ENCODE measurements at regions of chr2 and their contacts with region 1.

Region 1: GRCh38 chr2:44167940-44168680 is 565 bp upstream of the PPM1B start:
- DNase-seq: peak; percentile 98
- H3K4me3 Mint-ChIP-seq: peak overlapping the region; percentile 87
- H3K27ac Mint-ChIP-seq: peak overlapping the region; percentile 99
- H3K4me1 Mint-ChIP-seq: peaks cover 34% of the 10 kb centered on the region
- H3K27me3 Mint-ChIP-seq: no peaks in the 10 kb centered on the region

Region 2: GRCh38 chr2:43995733-43996533 is 172.2 kb before region 1 on chr2 and contains the start of gene LRPPRC:
- CTCF ChIA-PET with region 1: no interaction called
- POLR2A ChIA-PET with region 1: no interaction called
- intact Hi-C with region 1: loop called (anchors 1 kb)
- DNase-seq: peak; percentile 94
- H3K4me3 Mint-ChIP-seq: peak within 1 kb of the TSS; percentile 90
- H3K27ac Mint-ChIP-seq: peak within 1 kb of the TSS; percentile 95
- H3K4me1 Mint-ChIP-seq: peaks cover 40% of the 10 kb centered on the region
- H3K27me3 Mint-ChIP-seq: no peaks in the 10 kb centered on the region
- total RNA-seq, gene LRPPRC: 141 to 144 TPM

Region 3: DNA sequence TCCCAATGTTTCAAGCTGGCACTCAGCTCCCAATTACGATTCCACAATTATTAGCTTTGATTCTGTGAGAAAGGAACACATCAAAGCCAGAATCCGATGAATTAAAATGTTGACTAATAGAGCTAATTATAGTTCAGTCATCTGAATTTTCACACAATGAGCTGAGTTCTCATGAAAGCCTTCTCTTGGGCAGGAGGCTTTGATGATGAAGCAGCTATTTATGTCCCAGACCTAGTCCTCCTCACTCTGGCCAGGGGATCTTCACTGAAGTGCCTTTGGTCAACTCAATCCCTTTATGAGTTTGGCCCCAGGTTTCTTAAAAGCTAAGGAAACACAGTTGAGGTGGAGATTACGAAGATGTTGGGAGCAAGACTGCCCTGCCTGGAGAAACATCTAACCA is 74.1 kb before region 1 on chr2:
- CTCF ChIA-PET with region 1: no interaction called
- POLR2A ChIA-PET with region 1: no interaction called
- intact Hi-C with region 1: no loop called
- DNase-seq: no peak
- H3K4me3 Mint-ChIP-seq: no peak overlapping the region
- H3K27ac Mint-ChIP-seq: no peak overlapping the region
- H3K4me1 Mint-ChIP-seq: peaks cover 12% of the 10 kb centered on the region
- H3K27me3 Mint-ChIP-seq: no peaks in the 10 kb centered on the region

Region 4: DNA sequence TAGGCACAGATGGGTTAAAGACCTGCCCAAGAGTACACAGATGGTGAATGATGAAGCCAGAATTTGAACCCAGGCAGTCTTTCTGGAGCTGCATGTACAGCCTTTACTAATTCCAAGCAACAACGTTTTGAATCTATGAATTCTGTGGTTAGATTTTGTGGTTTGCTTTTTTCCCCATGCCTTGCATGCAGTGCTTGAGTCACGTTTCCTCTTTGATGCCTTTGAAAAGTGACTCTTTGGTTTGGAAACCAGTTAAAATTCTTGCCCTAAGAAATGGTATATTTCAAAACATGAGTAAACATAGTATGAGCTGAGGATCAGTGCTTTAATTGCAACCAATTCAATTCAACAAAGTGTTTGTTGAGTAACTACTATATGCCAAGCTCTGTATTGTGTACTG is 47.7 kb before region 1 on chr2:
- CTCF ChIA-PET with region 1: no interaction called
- POLR2A ChIA-PET with region 1: interaction called, 5 read pairs
- intact Hi-C with region 1: loop called (anchors 1 kb)
- DNase-seq: peak; percentile 63
- H3K4me3 Mint-ChIP-seq: peak overlapping the region; percentile 28
- H3K27ac Mint-ChIP-seq: peak overlapping the region; percentile 39
- H3K4me1 Mint-ChIP-seq: peaks cover 34% of the 10 kb centered on the region
- H3K27me3 Mint-ChIP-seq: peaks cover 5% of the 10 kb centered on the region

Region 5: GRCh38 chr2:44148999-44149398 is 19.1 kb before region 1 on chr2:
- CTCF ChIA-PET with region 1: no interaction called
- POLR2A ChIA-PET with region 1: no interaction called
- intact Hi-C with region 1: no loop called
- DNase-seq: no peak
- H3K4me3 Mint-ChIP-seq: no peak overlapping the region
- H3K27ac Mint-ChIP-seq: no peak overlapping the region
- H3K4me1 Mint-ChIP-seq: no peaks in the 10 kb centered on the region
- H3K27me3 Mint-ChIP-seq: no peaks in the 10 kb centered on the region

Region 6: GRCh38 chr2:44205169-44205568 is 37.1 kb after region 1 on chr2:
- CTCF ChIA-PET with region 1: no interaction called
- POLR2A ChIA-PET with region 1: no interaction called
- intact Hi-C with region 1: no loop called
- DNase-seq: no peak
- H3K4me3 Mint-ChIP-seq: no peak overlapping the region
- H3K27ac Mint-ChIP-seq: peak overlapping the region; percentile 28
- H3K4me1 Mint-ChIP-seq: peaks cover 45% of the 10 kb centered on the region
- H3K27me3 Mint-ChIP-seq: no peaks in the 10 kb centered on the region

Region 7: DNA sequence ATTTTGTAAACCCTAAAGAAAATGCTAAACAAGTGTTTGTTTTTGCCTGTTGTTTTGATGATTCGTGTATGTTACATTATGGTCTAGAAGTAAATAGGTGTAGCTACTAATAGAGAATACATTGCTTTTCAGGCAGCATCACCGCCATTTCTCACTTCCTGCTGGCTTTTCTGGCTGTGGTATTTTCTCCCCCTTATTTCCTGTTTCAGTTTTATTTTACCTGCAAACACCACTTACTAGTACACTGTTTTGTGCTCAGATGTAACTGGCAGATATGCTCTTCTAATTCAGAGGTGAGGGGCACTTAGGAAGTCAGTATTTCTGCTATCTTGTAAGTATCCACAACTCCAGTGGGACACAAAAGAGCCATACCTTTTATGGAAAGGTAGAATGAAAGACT is 69.1 kb after region 1 on chr2:
- CTCF ChIA-PET with region 1: no interaction called
- POLR2A ChIA-PET with region 1: no interaction called
- intact Hi-C with region 1: loop called (anchors 2 kb)
- DNase-seq: peak; percentile 34
- H3K4me3 Mint-ChIP-seq: no peak overlapping the region
- H3K27ac Mint-ChIP-seq: peak overlapping the region; percentile 36
- H3K4me1 Mint-ChIP-seq: peaks cover 26% of the 10 kb centered on the region
- H3K27me3 Mint-ChIP-seq: no peaks in the 10 kb centered on the region

Region 8: DNA sequence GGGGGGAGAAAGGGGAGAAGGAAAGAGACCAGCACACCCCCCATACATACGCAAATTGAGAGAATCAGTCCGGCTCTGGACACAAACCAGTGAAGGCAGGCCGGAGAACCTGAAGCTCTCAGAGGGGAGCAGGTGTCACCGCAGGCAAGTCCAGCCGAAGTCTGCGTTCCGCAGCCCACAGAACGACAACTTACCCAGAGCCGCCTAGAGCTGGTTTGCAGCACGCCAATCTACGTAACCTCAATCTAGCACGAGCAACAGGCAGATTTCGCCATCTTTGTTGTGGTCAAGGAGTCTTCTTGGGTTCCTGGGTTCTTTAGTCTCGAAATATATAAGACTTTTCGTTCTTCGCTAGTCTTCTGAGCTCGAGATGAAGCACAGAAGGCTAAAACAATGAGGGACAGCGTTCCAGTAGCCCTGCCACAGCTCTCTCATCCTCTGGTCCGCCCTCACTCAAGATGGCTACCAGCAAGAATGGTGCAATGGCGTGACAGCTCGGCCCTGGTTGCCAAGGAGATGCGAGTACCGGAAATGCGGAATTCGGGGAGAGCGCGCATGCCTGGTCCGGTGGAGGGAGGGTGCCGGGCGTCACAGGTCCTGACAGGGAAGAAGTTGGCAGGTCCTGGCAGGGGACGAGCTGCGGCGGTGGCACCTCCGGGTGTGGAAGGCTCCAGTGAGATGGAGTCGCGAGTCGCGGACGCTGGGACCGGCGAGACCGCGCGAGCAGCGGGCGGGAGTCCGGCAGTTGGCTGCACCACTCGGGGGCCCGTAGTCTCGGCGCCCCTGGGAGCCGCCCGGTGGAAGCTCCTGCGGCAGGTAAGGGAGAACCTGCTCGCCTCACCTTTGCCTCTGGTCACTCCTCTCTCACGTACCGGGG is 193.5 kb after region 1 on chr2 and contains the starts of genes CAMKMT and PREPL:
- CTCF ChIA-PET with region 1: no interaction called
- POLR2A ChIA-PET with region 1: interaction called, 19 read pairs
- intact Hi-C with region 1: loop called (anchors 1 kb)
- DNase-seq: peak; percentile 99
- H3K4me3 Mint-ChIP-seq: peak within 1 kb of the TSS; percentile 96
- H3K27ac Mint-ChIP-seq: peak within 1 kb of the TSS; percentile 99
- H3K4me1 Mint-ChIP-seq: peaks cover 48% of the 10 kb centered on the region
- H3K27me3 Mint-ChIP-seq: no peaks in the 10 kb centered on the region
- total RNA-seq, gene CAMKMT: 9.3 to 11.3 TPM
- total RNA-seq, gene PREPL: 25.2 to 32.1 TPM

Region 9: GRCh38 chr2:44705876-44706480 is 537.9 kb after region 1 on chr2:
- CTCF ChIA-PET with region 1: no interaction called
- POLR2A ChIA-PET with region 1: no interaction called
- intact Hi-C with region 1: no loop called
- DNase-seq: no peak
- H3K4me3 Mint-ChIP-seq: no peak overlapping the region
- H3K27ac Mint-ChIP-seq: no peak overlapping the region
- H3K4me1 Mint-ChIP-seq: peaks cover 2% of the 10 kb centered on the region
- H3K27me3 Mint-ChIP-seq: no peaks in the 10 kb centered on the region

Measured in activated CD4-positive, alpha-beta memory T cell treated with anti-CD3 and anti-CD28 coated beads for 36 hours (primary cell).